ENCODE measurements at regions of chr16 and their contacts with region 1.

Region 1: GRCh38 chr16:58000706-58001676 is at the start of gene USB1:
- DNase-seq: peak; percentile 92
- H3K4me3 ChIP-seq: peak within 1 kb of the TSS; percentile 75
- H3K27ac ChIP-seq: peak within 1 kb of the TSS; percentile 83
- H3K4me1 ChIP-seq: peaks cover 22% of the 10 kb centered on the region
- CTCF ChIP-seq: peak; percentile 58
- total RNA-seq, gene USB1: 10.4 and 12.5 TPM in 2 replicates

Region 2: DNA sequence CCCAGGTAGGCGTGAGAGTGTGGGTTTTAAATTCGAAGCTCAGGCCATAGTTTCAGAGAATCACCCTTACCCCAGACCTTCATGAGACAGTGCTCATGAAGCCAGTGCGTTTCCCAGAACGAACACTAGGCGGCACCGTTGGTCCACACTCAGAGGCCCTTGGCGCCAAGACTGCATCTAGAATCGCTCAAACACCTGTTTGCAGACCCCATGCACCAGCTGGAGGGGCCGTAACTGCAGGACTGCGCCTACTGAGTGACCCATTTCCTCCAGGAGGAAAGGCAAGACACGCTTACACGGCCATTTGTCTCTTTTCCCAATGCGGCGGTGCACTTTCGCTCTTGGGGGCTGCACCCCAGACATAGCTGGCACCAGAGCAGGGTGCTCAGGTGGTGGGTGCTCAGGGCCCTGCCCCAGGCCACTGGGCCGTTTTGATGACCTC is 424.5 kb before region 1 on chr16:
- CTCF ChIA-PET with region 1: no interaction called
- POLR2A ChIA-PET with region 1: no interaction called
- intact Hi-C with region 1: loop called (anchors 10 kb)
- DNase-seq: peak; percentile 80
- H3K4me3 ChIP-seq: no peak overlapping the region
- H3K27ac ChIP-seq: no peak overlapping the region
- H3K4me1 ChIP-seq: no peaks in the 10 kb centered on the region
- CTCF ChIP-seq: peak; percentile 90

Region 3: DNA sequence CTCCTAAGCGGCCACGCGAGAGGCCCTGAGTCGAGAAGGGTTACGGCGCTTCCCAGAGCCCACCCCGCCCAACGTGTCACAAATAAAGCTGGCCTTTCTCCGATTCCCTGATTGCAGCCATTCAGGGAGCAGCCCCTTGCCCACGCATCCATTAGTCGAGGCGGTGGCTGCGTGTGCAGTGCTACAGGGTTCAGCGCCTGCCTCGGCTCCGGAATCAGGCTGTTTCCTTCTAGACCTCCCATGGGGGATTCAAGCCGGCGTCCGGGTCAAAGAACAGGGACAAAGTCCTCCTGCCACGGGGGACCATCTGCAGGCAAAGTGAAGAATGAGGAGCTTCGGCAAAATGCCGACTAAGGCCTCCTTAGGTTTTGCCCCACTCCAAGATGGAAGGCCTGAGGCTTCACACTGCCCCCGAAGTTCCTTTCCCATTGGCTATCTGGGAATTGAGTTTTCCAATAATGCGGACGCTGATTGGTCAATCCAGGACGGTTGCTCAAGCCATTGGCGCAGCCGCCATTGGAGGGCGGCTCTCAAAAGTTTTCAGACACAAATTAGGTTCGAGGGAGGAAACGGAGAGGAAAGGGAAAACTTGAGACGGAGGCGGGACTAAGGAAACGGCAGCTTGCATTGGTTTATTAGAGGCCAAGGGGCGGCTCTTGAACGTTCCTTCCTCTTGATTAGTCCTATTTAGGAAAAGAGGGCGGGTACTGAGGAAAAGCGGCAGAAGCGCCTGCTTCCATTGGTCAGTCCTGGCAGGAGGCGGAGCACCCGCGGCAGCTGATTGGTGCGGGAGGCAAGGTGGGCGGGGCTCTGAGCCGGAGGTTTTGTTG is 265.9 kb before region 1 on chr16:
- CTCF ChIA-PET with region 1: no interaction called
- POLR2A ChIA-PET with region 1: no interaction called
- intact Hi-C with region 1: loop called (anchors 2 kb)
- DNase-seq: peak; percentile 100
- H3K4me3 ChIP-seq: peak overlapping the region; percentile 86
- H3K27ac ChIP-seq: peak overlapping the region; percentile 21
- H3K4me1 ChIP-seq: peaks cover 16% of the 10 kb centered on the region
- CTCF ChIP-seq: no peak

Region 4: GRCh38 chr16:57757326-57757786 is 243.6 kb before region 1 on chr16:
- CTCF ChIA-PET with region 1: no interaction called
- POLR2A ChIA-PET with region 1: no interaction called
- intact Hi-C with region 1: loop called (anchors 5 kb)
- DNase-seq: peak; percentile 78
- H3K4me3 ChIP-seq: no peak overlapping the region
- H3K27ac ChIP-seq: no peak overlapping the region
- H3K4me1 ChIP-seq: no peaks in the 10 kb centered on the region
- CTCF ChIP-seq: peak; percentile 93

Region 5: DNA sequence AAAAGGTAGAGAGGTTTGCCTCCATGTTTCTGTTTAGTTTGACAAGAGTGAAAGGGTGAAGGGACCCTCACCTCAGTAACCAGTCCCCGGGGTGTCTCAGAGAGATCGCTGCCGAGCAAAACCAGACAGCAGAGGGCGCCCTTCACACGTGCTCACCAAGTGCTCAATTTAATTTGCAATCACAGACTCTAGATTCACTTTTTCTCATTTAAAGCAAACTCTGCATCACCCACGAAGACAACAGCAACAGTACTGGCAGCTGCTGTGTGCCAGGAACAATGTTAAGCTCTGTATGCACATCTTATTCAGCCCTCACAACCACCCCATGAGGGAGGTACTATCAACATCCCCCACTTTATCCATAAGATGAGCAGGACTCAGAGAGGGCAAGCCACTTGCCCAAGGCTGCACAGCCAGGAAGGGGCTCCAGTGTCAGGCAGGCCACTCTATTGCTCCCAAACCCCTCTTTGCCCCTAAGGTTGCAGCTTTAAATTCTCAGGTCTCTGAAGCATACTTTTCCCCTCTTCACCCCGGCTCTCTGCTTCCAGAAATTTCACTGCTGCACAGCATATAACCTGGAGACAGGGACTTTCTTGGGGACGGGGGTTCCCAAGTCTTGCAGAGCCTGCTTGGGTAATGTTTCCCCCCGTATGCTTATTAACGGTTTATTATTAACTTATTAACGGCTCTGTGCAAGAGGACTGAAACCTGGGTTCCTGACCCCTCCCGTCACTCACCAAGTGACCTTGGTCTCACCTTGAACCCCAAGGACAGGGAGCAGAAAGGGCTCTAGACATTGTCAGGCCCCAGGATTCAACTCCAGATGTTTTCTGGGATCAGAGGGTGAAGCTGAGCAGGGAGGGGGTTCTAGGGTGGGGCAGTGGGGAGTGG is 101.0 kb before region 1 on chr16:
- CTCF ChIA-PET with region 1: no interaction called
- POLR2A ChIA-PET with region 1: no interaction called
- intact Hi-C with region 1: loop called (anchors 1 kb)
- DNase-seq: peak; percentile 68
- H3K4me3 ChIP-seq: no peak overlapping the region
- H3K27ac ChIP-seq: no peak overlapping the region
- H3K4me1 ChIP-seq: no peaks in the 10 kb centered on the region
- CTCF ChIP-seq: peak; percentile 98

Region 6: GRCh38 chr16:57955572-57956188 is 45.3 kb before region 1 on chr16:
- CTCF ChIA-PET with region 1: no interaction called
- POLR2A ChIA-PET with region 1: no interaction called
- intact Hi-C with region 1: no loop called
- DNase-seq: no peak
- H3K4me3 ChIP-seq: no peak overlapping the region
- H3K27ac ChIP-seq: no peak overlapping the region
- H3K4me1 ChIP-seq: no peaks in the 10 kb centered on the region
- CTCF ChIP-seq: no peak

Region 7: GRCh38 chr16:58129097-58129936 is 128.3 kb after region 1 on chr16 and contains the start of gene CFAP20:
- CTCF ChIA-PET with region 1: no interaction called
- POLR2A ChIA-PET with region 1: interaction called, 4 read pairs
- intact Hi-C with region 1: loop called (anchors 2 kb)
- DNase-seq: peak; percentile 100
- H3K4me3 ChIP-seq: peak within 1 kb of the TSS; percentile 99
- H3K27ac ChIP-seq: peak within 1 kb of the TSS; percentile 88
- H3K4me1 ChIP-seq: peaks cover 28% of the 10 kb centered on the region
- CTCF ChIP-seq: no peak
- total RNA-seq, gene CFAP20: 65.6 and 89.2 TPM in 2 replicates

Region 8: DNA sequence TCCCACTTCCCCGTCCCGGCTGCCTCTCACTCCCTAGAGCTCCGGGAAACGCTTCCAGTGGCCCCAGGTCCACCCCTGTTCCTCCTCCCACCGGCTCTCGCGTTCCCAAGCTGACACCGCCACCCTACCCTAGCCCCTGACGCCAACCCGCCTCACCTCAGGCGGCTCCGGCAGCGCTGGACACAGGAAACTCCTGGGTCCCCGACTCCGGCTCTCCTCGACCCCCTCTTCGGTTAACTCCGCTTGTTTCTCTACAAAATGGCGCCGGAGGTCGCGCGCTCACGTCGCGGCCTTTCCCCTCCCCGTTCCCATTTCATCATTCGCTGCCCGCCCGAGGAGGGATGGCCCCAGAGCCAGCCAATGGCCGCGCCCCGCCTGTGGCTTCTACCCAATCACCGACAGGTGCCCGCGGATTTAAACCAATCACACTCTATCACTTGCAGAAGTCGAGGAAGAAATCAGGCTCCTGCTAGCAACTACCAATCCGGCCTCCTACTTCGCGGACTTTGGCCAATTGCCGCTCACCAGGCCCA is 628.6 kb after region 1 on chr16 and contains the start of gene CNOT1:
- CTCF ChIA-PET with region 1: no interaction called
- POLR2A ChIA-PET with region 1: interaction called, 3 read pairs
- intact Hi-C with region 1: loop called (anchors 2 kb)
- DNase-seq: peak; percentile 99
- H3K4me3 ChIP-seq: peak within 1 kb of the TSS; percentile 97
- H3K27ac ChIP-seq: peak within 1 kb of the TSS; percentile 87
- H3K4me1 ChIP-seq: peaks cover 25% of the 10 kb centered on the region
- CTCF ChIP-seq: no peak
- total RNA-seq, gene CNOT1: 209 and 230 TPM in 2 replicates

Measured in OCI-LY7 (cell line).